A549 (cell line): ENCODE measurements at regions of chr9 and their contacts with region 1.

Region 1: GRCh38 chr9:129333953-129334724 is 156.1 kb upstream of the IER5L start:
- DNase-seq: peak; percentile 95 to 99
- ATAC-seq: peak; percentile 93 to 94
- H3K4me3 ChIP-seq: peak overlapping the region; percentile 7; the same call in 1 of the 3 replicates
- H3K27ac ChIP-seq: peak overlapping the region; percentile 99 to 100
- H3K4me1 ChIP-seq: peaks cover 58% of the 10 kb centered on the region
- CTCF ChIP-seq: peak; percentile 13; the same call in 1 of the 3 replicates
- EP300 ChIP-seq: peak; percentile 95 to 98
- POLR2A ChIP-seq: peak; percentile 4; the same call in 1 of the 2 replicates
- RAD21 ChIP-seq: peak; percentile 25 to 78; a peak in 4 of 5 replicates

Region 2: DNA sequence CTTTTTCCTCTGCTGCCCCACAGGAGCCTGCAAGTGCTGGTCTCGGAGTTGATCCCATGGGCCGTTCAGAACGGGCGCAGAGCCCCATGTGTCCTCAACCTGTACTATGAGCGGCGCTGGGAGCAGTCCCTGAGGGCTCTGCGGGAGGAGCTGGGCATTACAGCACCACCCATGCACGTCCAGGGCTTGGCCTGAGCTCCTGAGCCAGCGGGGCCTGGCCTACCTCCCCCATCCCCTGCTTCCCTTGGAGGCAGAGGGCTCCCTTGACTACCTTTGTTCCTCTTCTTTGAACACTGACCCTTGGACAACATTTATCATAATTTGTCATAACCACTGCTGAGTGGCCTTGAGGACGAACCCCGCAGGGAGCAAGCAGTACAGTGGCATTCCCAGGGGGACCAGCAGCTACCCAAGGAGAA is 1000.7 kb before region 1 on chr9:
- CTCF ChIA-PET with region 1: no interaction called
- POLR2A ChIA-PET with region 1: no interaction called
- DNase-seq: no peak
- ATAC-seq: no peak
- H3K4me3 ChIP-seq: no peak overlapping the region
- H3K27ac ChIP-seq: no peak overlapping the region
- H3K4me1 ChIP-seq: peaks cover 5% of the 10 kb centered on the region; the same call in 1 of the 3 replicates
- CTCF ChIP-seq: no peak
- EP300 ChIP-seq: no peak
- POLR2A ChIP-seq: no peak
- RAD21 ChIP-seq: no peak

Region 3: GRCh38 chr9:129322022-129322621 is 12.0 kb before region 1 on chr9:
- CTCF ChIA-PET with region 1: interaction called, 14 read pairs
- POLR2A ChIA-PET with region 1: interaction called, 7 read pairs
- DNase-seq: no peak
- ATAC-seq: no peak
- H3K4me3 ChIP-seq: no peak overlapping the region
- H3K27ac ChIP-seq: peak overlapping the region; percentile 38 to 82; a peak in 4 of 6 replicates
- H3K4me1 ChIP-seq: peaks cover 39% of the 10 kb centered on the region
- CTCF ChIP-seq: no peak
- EP300 ChIP-seq: no peak
- POLR2A ChIP-seq: no peak
- RAD21 ChIP-seq: no peak

Region 4: DNA sequence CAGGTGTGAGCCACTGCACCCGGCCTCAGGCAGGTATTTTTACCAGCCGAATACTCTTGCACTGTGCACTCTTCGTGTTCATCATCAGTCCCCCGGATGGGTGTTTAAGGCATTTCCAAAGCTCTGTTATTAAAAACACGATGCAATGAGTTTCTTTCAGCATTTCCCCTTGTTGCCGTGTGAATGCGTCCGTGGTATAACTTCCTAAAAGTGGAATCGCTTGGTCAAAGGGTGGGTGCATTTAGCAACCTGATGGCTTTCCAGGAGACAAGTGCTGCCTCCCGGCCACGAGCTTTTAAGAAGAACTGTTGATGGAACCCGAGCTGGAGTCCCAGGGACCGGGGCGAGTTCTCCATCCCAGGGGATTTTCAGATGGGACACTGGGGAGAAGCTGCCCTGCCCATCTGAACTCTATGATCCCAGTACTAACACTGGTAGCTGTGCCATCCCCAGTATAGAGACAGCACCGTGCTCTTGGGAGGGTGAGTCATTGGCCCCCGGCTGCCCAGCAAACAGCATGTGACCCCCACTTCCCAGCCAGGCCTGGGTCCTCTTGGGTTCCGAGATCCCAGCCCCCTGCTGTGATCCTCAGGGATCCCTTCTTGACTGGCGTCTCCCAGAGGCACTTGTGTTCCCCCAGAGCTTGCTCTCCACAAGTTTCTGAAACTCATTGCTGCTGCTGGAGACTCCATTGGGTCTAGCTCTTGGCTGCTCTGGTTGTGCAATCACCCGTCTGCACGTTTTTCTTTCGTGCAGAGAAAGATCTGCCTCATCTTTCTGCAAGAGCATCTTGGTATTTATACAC is 13.4 kb after region 1 on chr9:
- CTCF ChIA-PET with region 1: interaction called, 5 read pairs
- POLR2A ChIA-PET with region 1: interaction called, 10 read pairs
- DNase-seq: peak; percentile 65 to 75
- ATAC-seq: peak; percentile 76 to 83
- H3K4me3 ChIP-seq: no peak overlapping the region
- H3K27ac ChIP-seq: peak overlapping the region; percentile 98 to 99
- H3K4me1 ChIP-seq: peaks cover 68% of the 10 kb centered on the region
- CTCF ChIP-seq: no peak
- EP300 ChIP-seq: peak; percentile 19 to 54; a peak in 2 of 5 replicates
- POLR2A ChIP-seq: no peak
- RAD21 ChIP-seq: peak in 1 of 2 experiments; percentile 36; a peak in 2 of 5 replicates

Region 5: GRCh38 chr9:129482521-129483414 is 148.6 kb after region 1 on chr9:
- CTCF ChIA-PET with region 1: interaction called, 4 read pairs
- POLR2A ChIA-PET with region 1: interaction called, 29 read pairs
- DNase-seq: peak in 1 of 2 experiments; percentile 86
- ATAC-seq: peak; percentile 47 to 64
- H3K4me3 ChIP-seq: peak overlapping the region; percentile 47
- H3K27ac ChIP-seq: peak overlapping the region; percentile 99 to 100
- H3K4me1 ChIP-seq: peaks cover 90% of the 10 kb centered on the region
- CTCF ChIP-seq: no peak; the same call in 2 of the 3 replicates
- EP300 ChIP-seq: peak; percentile 71 to 93; a peak in 4 of 5 replicates
- POLR2A ChIP-seq: peak; percentile 29; the same call in 1 of the 2 replicates
- RAD21 ChIP-seq: peak in 1 of 2 experiments; percentile 43; a peak in 2 of 5 replicates